Activated T-helper 1 cell treated with anti-CD3 and anti-CD28 coated beads, Interleukin-12 subunit alpha, Interleukin-12 subunit beta, Interleukin-2, Interleukin-4 antibody, amounts not matched to agents 30 ng/mL and 10 ng/mL and 1 ng/mL, durations not matched to agents 14 hours and 24 hours and 36 hours (primary cell): ENCODE measurements at regions of chr10 and their contacts with region 1.

Region 1: GRCh38 chr10:101693978-101694673 is 844 bp downstream of the FBXW4 start:
- DNase-seq: peak; percentile 70
- H3K4me3 Mint-ChIP-seq: peak overlapping the region; percentile 93
- H3K27ac Mint-ChIP-seq: peak overlapping the region; percentile 98
- H3K4me1 Mint-ChIP-seq: peaks cover 41% of the 10 kb centered on the region
- H3K27me3 Mint-ChIP-seq: no peaks in the 10 kb centered on the region

Region 2: GRCh38 chr10:101587725-101588653 is 106.1 kb before region 1 on chr10 and contains the starts of genes DPCD and POLL:
- intact Hi-C with region 1: loop called (anchors 2 kb)
- DNase-seq: peak; percentile 85
- H3K4me3 Mint-ChIP-seq: peak within 1 kb of the TSS; percentile 93
- H3K27ac Mint-ChIP-seq: peak within 1 kb of the TSS; percentile 81
- H3K4me1 Mint-ChIP-seq: peaks cover 24% of the 10 kb centered on the region
- H3K27me3 Mint-ChIP-seq: peaks cover 4% of the 10 kb centered on the region
- total RNA-seq, gene DPCD: 3.6 and 4.8 TPM in 2 replicates
- total RNA-seq, gene POLL: 32.4 and 33.5 TPM in 2 replicates

Region 3: DNA sequence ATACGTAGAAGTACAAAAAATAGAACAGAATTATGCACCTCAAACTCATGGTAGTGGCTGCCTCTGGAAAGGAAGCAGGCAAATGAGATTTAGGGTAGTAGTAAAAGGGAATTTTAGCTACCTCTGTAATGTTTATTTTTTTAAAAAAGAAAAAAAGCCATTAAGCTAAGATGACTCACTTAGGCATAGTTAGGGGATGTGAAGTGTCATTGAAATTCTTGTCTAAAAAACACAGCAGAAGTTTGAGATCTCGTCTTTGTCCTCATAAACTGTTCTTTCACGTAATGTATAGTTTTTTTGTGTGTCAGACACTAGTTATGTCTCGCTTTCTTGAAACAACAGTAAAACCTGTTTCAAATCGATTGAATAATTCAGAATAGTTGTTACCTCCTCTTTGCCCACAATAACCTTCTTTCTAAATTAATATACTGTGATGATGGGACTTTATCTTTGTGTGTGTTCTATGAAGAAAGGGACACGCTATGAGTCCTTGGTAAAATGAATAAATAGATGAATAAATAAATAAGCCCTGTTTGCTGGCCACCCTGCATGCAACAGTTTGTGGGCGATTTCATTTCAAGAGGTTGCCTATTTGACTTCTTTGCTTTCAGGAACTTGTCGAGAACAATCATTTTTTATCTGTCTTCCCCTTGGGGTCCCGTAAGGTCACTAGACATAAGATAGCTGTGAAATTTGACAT is 15.4 kb after region 1 on chr10:
- intact Hi-C with region 1: loop called (anchors 2 kb)
- DNase-seq: no peak
- H3K4me3 Mint-ChIP-seq: no peak overlapping the region
- H3K27ac Mint-ChIP-seq: no peak overlapping the region
- H3K4me1 Mint-ChIP-seq: peaks cover 31% of the 10 kb centered on the region
- H3K27me3 Mint-ChIP-seq: peaks cover 50% of the 10 kb centered on the region

Region 4: DNA sequence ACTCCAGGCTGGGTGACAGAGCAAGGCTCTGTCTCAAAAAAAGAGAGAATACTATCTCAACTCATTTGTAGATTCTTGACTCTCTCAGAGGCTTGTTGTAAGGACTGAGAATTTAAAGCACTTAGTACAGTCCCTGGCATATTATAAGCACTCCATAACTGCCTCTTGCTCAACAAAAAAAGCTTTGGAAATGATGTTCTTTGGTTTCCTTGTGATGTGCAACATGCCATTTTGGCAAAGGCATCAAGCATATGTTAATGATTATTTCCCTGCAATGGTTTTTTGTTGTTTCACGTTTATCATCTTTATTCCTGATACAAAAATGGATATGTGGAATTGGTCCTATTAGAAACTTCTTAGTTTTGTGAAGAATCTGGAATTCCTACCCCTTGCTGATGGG is 473.7 kb after region 1 on chr10:
- intact Hi-C with region 1: no loop called
- DNase-seq: no peak
- H3K4me3 Mint-ChIP-seq: no peak overlapping the region
- H3K27ac Mint-ChIP-seq: no peak overlapping the region
- H3K4me1 Mint-ChIP-seq: peaks cover 10% of the 10 kb centered on the region
- H3K27me3 Mint-ChIP-seq: no peaks in the 10 kb centered on the region